T-cell (primary cell): ENCODE measurements at regions of chr7 and their contacts with region 1.

Region 1: DNA sequence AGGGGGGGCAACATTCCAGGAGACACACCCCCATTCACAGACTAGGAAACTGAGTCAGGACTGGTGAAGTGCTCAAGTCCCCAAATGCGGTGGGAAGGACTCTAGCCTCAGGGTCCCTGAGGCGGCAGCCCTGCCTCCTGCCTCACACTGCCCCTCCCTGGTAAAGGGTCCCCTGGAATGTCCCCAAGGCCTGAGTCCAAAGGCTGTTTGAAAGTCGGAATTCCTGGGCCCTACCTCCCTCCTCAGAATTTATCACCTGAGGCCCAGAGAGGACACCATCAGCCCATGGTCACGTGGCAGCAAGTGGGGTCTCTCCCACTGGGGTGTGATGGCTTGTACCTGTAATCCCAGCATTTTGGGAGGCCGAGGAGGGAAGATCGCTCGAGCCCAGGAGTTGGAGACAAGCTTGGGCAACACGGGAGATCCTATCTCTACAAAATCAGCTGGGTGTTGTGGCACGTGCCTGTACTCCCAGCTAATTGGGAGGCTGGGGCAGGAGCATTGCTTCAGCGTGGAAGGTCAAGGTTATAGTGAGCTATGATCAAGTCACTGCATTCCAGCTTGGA is 110.3 kb upstream of the TNRC18 start:
- DNase-seq: no peak
- ATAC-seq: no peak
- H3K4me3 ChIP-seq: no peak overlapping the region
- H3K4me3 Mint-ChIP-seq: peak overlapping the region in 1 of 3 donors; percentile 98
- H3K27ac ChIP-seq: peak overlapping the region; percentile 63
- H3K27ac Mint-ChIP-seq: peak overlapping the region; percentile 97
- H3K4me1 ChIP-seq: peaks cover 4 to 50% of the 10 kb centered on the region in 2 experiments
- H3K4me1 Mint-ChIP-seq: peaks cover 19 to 33% (median 30%) of the 10 kb centered on the region in 3 donors
- H3K27me3 ChIP-seq: no peaks in the 10 kb centered on the region
- H3K27me3 Mint-ChIP-seq: no peaks in the 10 kb centered on the region

Region 2: GRCh38 chr7:5234852-5235831 is 298.8 kb before region 1 on chr7:
- CTCF ChIA-PET with region 1: no interaction called
- POLR2A ChIA-PET with region 1: interaction called in 1 of 2 experiments, 12 read pairs
- DNase-seq: no peak
- ATAC-seq: no peak
- H3K4me3 ChIP-seq: no peak overlapping the region
- H3K4me3 Mint-ChIP-seq: no peak overlapping the region
- H3K27ac ChIP-seq: no peak overlapping the region
- H3K27ac Mint-ChIP-seq: no peak overlapping the region
- H3K4me1 ChIP-seq: peaks cover 18 to 28% of the 10 kb centered on the region in 2 experiments
- H3K4me1 Mint-ChIP-seq: peaks cover 19 to 46% (median 42%) of the 10 kb centered on the region in 3 donors
- H3K27me3 ChIP-seq: peaks cover 0 to 29% of the 10 kb centered on the region in 2 experiments
- H3K27me3 Mint-ChIP-seq: peaks cover 0 to 19% of the 10 kb centered on the region in 2 donors

Region 3: DNA sequence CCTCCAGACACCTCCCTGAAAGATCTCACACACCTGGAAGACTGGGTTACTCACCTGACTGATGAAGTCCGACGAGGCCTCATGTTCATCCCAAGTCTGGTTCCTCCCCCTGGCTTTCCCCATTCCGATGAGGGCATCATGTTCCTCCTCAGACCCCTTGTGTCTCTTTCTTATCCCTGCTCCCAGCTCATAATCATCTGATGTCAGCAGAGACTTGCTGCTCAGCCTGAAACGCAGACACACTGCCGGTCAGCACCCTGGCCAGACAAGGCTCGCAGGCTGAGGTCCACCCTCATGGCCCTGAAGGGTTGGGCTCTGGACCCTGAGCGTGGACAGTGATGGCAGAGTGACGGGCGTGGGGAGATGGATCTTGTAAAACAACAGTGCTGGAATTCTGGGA is 174.6 kb before region 1 on chr7:
- CTCF ChIA-PET with region 1: no interaction called
- POLR2A ChIA-PET with region 1: no interaction called
- DNase-seq: no peak
- ATAC-seq: no peak
- H3K4me3 ChIP-seq: no peak overlapping the region
- H3K4me3 Mint-ChIP-seq: no peak overlapping the region
- H3K27ac ChIP-seq: no peak overlapping the region
- H3K27ac Mint-ChIP-seq: peak overlapping the region in 1 of 2 donors; percentile 17
- H3K4me1 ChIP-seq: peaks cover 0 to 12% of the 10 kb centered on the region in 2 experiments
- H3K4me1 Mint-ChIP-seq: peaks cover 15 to 18% (median 16%) of the 10 kb centered on the region in 3 donors
- H3K27me3 ChIP-seq: no peaks in the 10 kb centered on the region
- H3K27me3 Mint-ChIP-seq: no peaks in the 10 kb centered on the region

Region 4: GRCh38 chr7:5383314-5384098 is 150.4 kb before region 1 on chr7:
- CTCF ChIA-PET with region 1: no interaction called
- POLR2A ChIA-PET with region 1: no interaction called
- DNase-seq: no peak
- ATAC-seq: no peak
- H3K4me3 ChIP-seq: no peak overlapping the region
- H3K4me3 Mint-ChIP-seq: peak overlapping the region in 1 of 3 donors; percentile 41
- H3K27ac ChIP-seq: no peak overlapping the region
- H3K27ac Mint-ChIP-seq: no peak overlapping the region
- H3K4me1 ChIP-seq: peaks cover 0 to 49% of the 10 kb centered on the region in 2 experiments
- H3K4me1 Mint-ChIP-seq: peaks cover 30 to 41% (median 39%) of the 10 kb centered on the region in 3 donors
- H3K27me3 ChIP-seq: no peaks in the 10 kb centered on the region
- H3K27me3 Mint-ChIP-seq: no peaks in the 10 kb centered on the region

Region 5: GRCh38 chr7:5396999-5397663 is 136.8 kb before region 1 on chr7:
- CTCF ChIA-PET with region 1: no interaction called
- POLR2A ChIA-PET with region 1: no interaction called
- DNase-seq: peak; percentile 70 to 97 (median 93)
- ATAC-seq: peak; percentile 93 to 95 (median 94)
- H3K4me3 ChIP-seq: peak overlapping the region; percentile 92 to 95
- H3K4me3 Mint-ChIP-seq: peak overlapping the region; percentile 77 to 81 (median 80)
- H3K27ac ChIP-seq: peak overlapping the region; percentile 95
- H3K27ac Mint-ChIP-seq: peak overlapping the region; percentile 91 to 94
- H3K4me1 ChIP-seq: peaks cover 6 to 55% of the 10 kb centered on the region in 2 experiments
- H3K4me1 Mint-ChIP-seq: peaks cover 31 to 46% (median 33%) of the 10 kb centered on the region in 3 donors
- H3K27me3 ChIP-seq: no peaks in the 10 kb centered on the region
- H3K27me3 Mint-ChIP-seq: no peaks in the 10 kb centered on the region

Region 6: DNA sequence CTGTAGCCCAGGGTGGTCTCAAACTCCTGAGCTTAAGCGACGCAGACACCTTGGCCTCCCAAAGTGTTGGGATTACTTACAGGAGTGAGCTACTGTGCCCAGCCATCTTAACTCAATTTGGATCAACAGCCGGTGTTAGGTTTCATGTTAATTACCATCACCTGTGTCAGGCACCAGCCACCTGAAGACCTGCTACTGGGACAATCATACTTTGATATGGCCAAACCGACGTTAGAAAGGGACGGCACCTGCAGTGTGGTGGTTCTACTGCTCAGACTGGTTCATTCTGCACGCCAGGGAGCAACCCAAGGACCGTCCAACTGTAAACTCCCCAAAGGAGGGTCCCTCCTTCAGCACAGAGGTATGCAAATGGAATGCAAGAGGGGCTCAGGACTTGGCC is 812.7 kb after region 1 on chr7:
- CTCF ChIA-PET with region 1: no interaction called
- POLR2A ChIA-PET with region 1: no interaction called
- DNase-seq: no peak
- ATAC-seq: no peak
- H3K4me3 ChIP-seq: no peak overlapping the region
- H3K4me3 Mint-ChIP-seq: peak overlapping the region; percentile 47 to 69 (median 63)
- H3K27ac ChIP-seq: no peak overlapping the region
- H3K27ac Mint-ChIP-seq: no peak overlapping the region
- H3K4me1 ChIP-seq: peaks cover 6 to 20% of the 10 kb centered on the region in 2 experiments
- H3K4me1 Mint-ChIP-seq: peaks cover 28 to 38% (median 37%) of the 10 kb centered on the region in 3 donors
- H3K27me3 ChIP-seq: no peaks in the 10 kb centered on the region
- H3K27me3 Mint-ChIP-seq: no peaks in the 10 kb centered on the region